Naive thymus-derived CD4-positive, alpha-beta T cell (primary cell): ENCODE measurements at regions of chr14 and their contacts with region 1.

Region 1: DNA sequence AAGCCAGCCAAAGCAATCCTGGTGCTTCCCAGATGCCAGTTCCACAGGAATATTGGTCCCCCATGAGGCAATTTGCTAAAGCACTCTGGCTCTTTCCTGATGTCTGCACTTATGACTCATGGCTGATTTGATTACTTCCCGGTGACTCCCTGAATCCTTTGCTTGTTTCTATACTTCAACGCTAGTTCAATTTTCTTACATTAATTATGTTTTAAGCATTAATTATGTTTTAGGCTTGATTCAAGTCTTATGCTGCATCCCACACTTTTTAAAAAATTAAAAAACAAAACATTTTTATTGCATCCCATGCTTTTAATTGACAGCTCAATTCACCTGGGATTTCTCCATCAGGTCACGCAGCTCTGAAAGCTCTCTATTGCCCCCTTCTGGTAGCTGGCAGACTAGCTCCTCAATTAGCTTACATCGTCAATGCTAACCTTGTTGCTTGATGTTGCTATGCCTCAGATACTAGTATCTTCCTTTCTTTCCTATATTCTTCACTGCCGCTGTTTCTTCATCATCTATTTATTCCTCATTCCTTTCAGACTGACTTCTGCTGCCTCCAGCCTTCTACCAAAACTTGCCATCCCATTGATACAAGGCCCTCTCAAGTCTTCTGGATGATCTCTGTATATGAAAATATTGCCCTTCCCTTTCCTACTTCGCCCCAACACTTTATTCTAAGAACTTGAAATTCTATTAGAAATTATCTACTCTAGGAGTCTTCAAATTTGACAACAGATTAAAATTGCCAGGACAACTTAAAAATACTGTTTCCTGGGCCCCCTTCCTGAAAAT is 32.0 kb downstream of the TSHR start:
- DNase-seq: peak; percentile 13 to 74 (median 58)
- ATAC-seq: peak; percentile 85
- H3K4me3 ChIP-seq: no peak overlapping the region
- H3K4me3 Mint-ChIP-seq: no peak overlapping the region
- H3K27ac ChIP-seq: no peak overlapping the region
- H3K27ac Mint-ChIP-seq: no peak overlapping the region
- H3K4me1 ChIP-seq: no peaks in the 10 kb centered on the region
- H3K4me1 Mint-ChIP-seq: peaks cover 0 to 14% (median 0%) of the 10 kb centered on the region in 7 donors
- H3K27me3 ChIP-seq: no peaks in the 10 kb centered on the region
- H3K27me3 Mint-ChIP-seq: peaks cover 0 to 21% (median 11%) of the 10 kb centered on the region in 5 donors

Region 2: GRCh38 chr14:80930836-80931389 is 56.5 kb before region 1 on chr14:
- CTCF ChIA-PET with region 1: no interaction called
- POLR2A ChIA-PET with region 1: no interaction called
- intact Hi-C with region 1: loop called in 1 of 2 experiments (anchors 10 kb)
- DNase-seq: peak in 7 of 9 donors; percentile 25 to 73 (median 57)
- ATAC-seq: peak; percentile 87
- H3K4me3 ChIP-seq: no peak overlapping the region
- H3K4me3 Mint-ChIP-seq: peak overlapping the region in 9 of 10 donors; percentile 2 to 84 (median 43)
- H3K27ac ChIP-seq: no peak overlapping the region
- H3K27ac Mint-ChIP-seq: peak overlapping the region in 8 of 9 donors; percentile 26 to 93 (median 60)
- H3K4me1 ChIP-seq: peaks cover 6 to 25% of the 10 kb centered on the region in 2 donors
- H3K4me1 Mint-ChIP-seq: peaks cover 10 to 63% (median 18%) of the 10 kb centered on the region in 7 donors
- H3K27me3 ChIP-seq: no peaks in the 10 kb centered on the region
- H3K27me3 Mint-ChIP-seq: peaks cover 0 to 6% (median 0%) of the 10 kb centered on the region in 5 donors

Region 3: DNA sequence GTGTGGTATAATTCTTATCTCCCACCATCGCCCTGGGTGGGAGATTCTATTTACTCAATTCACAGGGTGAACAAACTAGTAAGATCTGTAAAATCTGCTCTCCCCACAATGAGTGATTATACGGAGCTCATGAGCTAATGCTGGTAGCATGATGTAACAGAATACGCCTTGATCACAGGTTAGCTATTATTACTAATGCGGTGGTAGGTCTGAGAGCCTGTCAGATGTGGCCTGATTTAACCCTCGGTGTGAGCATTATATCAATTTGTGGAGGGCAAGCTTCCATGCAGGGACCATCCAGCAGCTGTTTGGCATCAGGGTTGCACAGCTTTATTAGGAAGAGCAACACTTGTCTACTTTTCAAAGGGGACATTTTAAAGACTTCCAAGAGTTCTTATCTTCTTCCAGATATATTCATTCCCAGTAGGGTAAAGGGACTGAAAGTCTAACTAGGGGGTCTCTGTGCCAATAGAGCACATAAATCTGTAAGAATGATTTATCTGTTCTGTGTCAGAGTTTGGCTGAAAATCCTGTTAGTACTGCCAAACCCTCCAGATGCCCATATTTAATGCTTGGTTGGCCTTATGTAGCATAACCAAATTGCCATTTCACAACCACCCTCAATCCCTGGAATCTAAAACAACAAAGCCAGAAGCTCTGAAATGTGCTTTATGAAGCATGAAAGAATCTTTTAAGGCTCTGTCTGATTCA is 13.3 kb before region 1 on chr14:
- CTCF ChIA-PET with region 1: interaction called, 10 read pairs
- POLR2A ChIA-PET with region 1: no interaction called
- intact Hi-C with region 1: no loop called
- DNase-seq: no peak
- ATAC-seq: peak; percentile 46
- H3K4me3 ChIP-seq: no peak overlapping the region
- H3K4me3 Mint-ChIP-seq: no peak overlapping the region
- H3K27ac ChIP-seq: no peak overlapping the region
- H3K27ac Mint-ChIP-seq: no peak overlapping the region
- H3K4me1 ChIP-seq: peaks cover 0 to 8% of the 10 kb centered on the region in 2 donors
- H3K4me1 Mint-ChIP-seq: peaks cover 0 to 37% (median 5%) of the 10 kb centered on the region in 7 donors
- H3K27me3 ChIP-seq: no peaks in the 10 kb centered on the region
- H3K27me3 Mint-ChIP-seq: peaks cover 0 to 46% (median 8%) of the 10 kb centered on the region in 5 donors

Region 4: GRCh38 chr14:81464247-81465002 is 477.0 kb after region 1 on chr14:
- CTCF ChIA-PET with region 1: no interaction called
- POLR2A ChIA-PET with region 1: no interaction called
- intact Hi-C with region 1: loop called in 1 of 2 experiments (anchors 5 kb)
- DNase-seq: peak; percentile 15 to 86 (median 75)
- ATAC-seq: peak; percentile 90
- H3K4me3 ChIP-seq: peak overlapping the region; percentile 85
- H3K4me3 Mint-ChIP-seq: peak overlapping the region; percentile 76 to 91 (median 88)
- H3K27ac ChIP-seq: peak overlapping the region; percentile 76
- H3K27ac Mint-ChIP-seq: peak overlapping the region; percentile 70 to 98 (median 91)
- H3K4me1 ChIP-seq: no peaks in the 10 kb centered on the region
- H3K4me1 Mint-ChIP-seq: peaks cover 0 to 14% (median 8%) of the 10 kb centered on the region in 7 donors
- H3K27me3 ChIP-seq: no peaks in the 10 kb centered on the region
- H3K27me3 Mint-ChIP-seq: no peaks in the 10 kb centered on the region